Aorta (tissue), 5 donors: ENCODE measurements at regions of chr4 and their contacts with region 1.

Region 1: DNA sequence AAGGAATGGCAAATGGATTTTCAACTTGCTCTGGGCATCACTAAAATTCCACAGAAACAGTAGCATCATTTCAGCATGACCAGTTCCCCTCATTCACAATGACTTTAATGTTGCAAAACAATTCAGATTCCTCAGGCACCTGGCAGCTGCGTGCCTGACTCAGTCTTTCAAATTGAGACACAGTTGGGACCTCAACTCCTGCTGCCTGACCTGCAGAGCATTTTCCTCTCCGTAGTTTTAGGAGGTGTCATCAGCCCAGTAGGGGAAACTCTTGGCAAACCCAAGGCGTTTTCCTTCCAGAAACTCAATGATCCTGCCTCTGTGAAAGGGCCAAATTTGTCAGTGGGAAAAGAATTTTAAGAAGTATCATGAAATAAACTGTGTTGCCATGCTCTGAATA is 388.9 kb downstream of the SPRY1 start:
- DNase-seq: peak; percentile 74 to 77
- ATAC-seq: peak; percentile 79
- H3K4me3 ChIP-seq: no peak overlapping the region
- H3K27ac ChIP-seq: no peak overlapping the region
- H3K4me1 ChIP-seq: peaks cover 3 to 12% of the 10 kb centered on the region in 2 donors
- H3K27me3 ChIP-seq: no peaks in the 10 kb centered on the region

Region 2: DNA sequence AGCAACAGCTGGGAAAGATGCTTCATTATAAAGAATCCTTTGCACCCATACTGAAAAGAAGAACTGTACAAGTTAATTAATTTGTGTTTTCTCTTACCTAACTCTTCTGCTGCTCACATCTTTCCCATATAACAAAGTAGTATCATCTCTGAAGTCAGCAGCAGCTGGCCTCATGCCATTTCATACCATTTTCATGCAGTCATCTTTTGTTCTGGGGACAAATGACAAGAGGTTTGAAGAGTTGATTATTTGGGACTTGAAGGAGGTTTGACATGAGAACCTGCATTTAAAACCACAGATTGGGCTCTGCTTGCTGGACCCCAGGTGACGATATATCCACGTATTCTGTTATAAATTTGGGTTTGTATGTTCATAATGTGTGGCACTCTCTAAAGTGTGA is 41.4 kb after region 1 on chr4:
- intact Hi-C with region 1: loop called (anchors 5 kb)
- DNase-seq: no peak
- ATAC-seq: no peak
- H3K4me3 ChIP-seq: no peak overlapping the region
- H3K27ac ChIP-seq: no peak overlapping the region
- H3K4me1 ChIP-seq: peaks cover 0 to 1% of the 10 kb centered on the region in 2 donors
- H3K27me3 ChIP-seq: no peaks in the 10 kb centered on the region

Region 3: DNA sequence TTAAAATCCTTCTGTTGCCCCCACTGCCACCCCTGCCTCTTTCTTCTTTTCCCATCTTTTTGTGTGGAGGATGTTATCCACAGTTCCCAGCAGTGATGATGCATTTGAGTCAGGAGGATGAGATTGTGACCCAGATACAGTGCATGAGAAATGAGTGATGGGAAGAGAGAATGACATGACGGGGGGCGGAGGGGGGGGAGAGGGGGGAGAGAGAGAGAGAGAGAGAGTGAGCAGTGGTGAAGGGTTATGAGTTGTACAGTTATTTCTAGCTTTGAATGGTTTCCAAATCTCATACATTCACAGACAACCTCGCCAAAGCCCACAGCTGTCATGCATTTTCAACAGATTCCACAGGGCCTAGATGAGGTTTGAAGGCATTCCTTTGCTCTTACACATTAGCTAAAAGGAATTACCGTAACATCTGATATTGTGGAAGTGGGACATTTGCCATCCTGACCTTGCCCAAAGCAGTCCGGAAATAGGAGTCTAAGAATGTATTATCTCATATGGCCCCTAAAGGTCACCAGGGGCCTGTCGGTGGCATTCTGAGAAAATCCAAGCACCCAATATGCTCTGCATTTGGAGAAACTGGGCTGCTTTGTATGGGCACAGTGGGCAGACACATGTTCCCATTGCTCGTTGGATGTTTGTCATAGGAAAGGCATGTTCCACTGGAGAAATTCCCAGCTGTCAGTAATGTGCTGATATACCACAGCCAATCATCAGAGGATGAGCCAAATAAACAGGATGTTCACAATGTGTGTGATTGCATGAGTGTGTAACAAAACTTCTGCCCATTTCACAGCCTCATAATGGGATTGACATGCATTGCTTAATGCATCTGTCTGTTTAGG is 46.9 kb after region 1 on chr4:
- intact Hi-C with region 1: loop called (anchors 5 kb)
- DNase-seq: peak; percentile 66 to 74
- ATAC-seq: peak; percentile 80
- H3K4me3 ChIP-seq: no peak overlapping the region
- H3K27ac ChIP-seq: peak overlapping the region; percentile 93 to 98
- H3K4me1 ChIP-seq: peaks cover 5% of the 10 kb centered on the region in 2 donors
- H3K27me3 ChIP-seq: no peaks in the 10 kb centered on the region

Region 4: GRCh38 chr4:123856689-123857545 is 71.4 kb after region 1 on chr4:
- intact Hi-C with region 1: no loop called
- DNase-seq: peak in 1 of 2 donors; percentile 53
- ATAC-seq: peak; percentile 68
- H3K4me3 ChIP-seq: peak overlapping the region in 1 of 2 donors; percentile 18
- H3K27ac ChIP-seq: peak overlapping the region; percentile 25 to 28
- H3K4me1 ChIP-seq: no peaks in the 10 kb centered on the region
- H3K27me3 ChIP-seq: no peaks in the 10 kb centered on the region

Region 5: DNA sequence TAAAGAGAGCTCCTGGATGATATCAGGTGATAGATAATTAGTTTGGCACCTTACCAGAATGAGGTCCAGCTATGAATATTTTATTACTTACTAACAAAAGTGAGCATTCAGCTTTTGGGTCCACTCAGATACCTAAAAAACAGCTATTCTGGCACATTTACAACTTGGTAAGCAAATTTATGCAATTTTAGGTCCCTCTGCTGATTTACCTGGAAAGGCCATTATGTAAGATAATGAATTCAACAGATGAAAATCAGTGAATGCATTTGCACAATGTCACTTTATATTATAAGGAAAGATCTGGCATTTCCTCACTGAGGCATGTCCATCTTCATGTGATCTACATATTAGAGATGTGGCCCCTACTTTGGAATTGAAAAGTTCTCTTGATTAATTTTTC is 128.1 kb after region 1 on chr4:
- intact Hi-C with region 1: no loop called
- DNase-seq: no peak
- ATAC-seq: no peak
- H3K4me3 ChIP-seq: no peak overlapping the region
- H3K27ac ChIP-seq: no peak overlapping the region
- H3K4me1 ChIP-seq: no peaks in the 10 kb centered on the region
- H3K27me3 ChIP-seq: no peaks in the 10 kb centered on the region